Vagina (tissue), 2 donors: ENCODE measurements at regions of chr4 and their contacts with region 1.

Region 1: DNA sequence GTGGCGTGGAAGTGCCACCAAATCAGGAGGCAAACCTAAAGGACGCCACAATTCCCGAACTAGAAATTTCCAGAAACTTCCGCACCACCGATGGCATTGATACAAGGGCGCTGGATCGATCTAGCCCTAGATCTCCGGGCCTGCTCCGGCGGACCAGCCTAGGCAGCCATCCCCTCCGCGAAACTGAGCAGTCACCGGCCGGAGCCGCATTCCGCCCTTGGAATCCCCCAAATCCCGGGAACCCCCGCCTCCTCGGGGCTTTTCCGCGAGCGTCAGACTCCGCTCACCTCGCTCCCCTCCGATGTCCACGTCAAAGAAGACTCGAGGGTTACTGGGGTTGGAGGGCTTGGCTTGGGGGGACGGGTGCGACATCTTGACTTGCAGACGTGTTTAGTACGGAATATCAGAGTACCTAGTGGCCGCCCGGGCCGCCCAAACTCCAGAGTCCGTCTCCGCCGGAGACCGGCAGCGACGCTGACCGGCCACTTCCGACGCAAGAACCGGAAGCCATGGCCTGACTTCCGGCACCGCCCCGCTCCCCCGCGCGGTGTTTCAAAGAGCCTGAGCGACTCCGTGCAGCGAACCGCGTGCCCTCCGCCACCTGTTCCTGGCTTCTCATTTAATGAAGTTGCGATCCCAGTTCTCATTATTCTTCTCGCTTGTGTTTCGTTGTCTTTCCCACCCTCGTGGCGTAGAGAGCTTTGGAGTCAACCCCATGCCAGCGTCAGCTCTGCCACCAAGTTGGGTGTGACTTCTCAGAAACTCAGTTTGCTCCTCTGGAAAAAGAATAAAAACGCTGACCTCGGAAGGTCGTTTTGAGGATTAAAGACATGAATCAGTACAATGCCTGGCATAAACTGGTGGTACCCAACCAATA is at the start of gene PPID:
- DNase-seq: no peak
- H3K4me3 ChIP-seq: peak within 1 kb of the TSS; percentile 77 to 92
- H3K27ac ChIP-seq: peak within 1 kb of the TSS; percentile 96
- H3K4me1 ChIP-seq: peaks cover 12% of the 10 kb centered on the region
- H3K27me3 ChIP-seq: no peaks in the 10 kb centered on the region
- CTCF ChIP-seq: no peak
- POLR2A ChIP-seq: peak in 1 of 2 donors; percentile 68
- total RNA-seq, gene PPID: 15.0 TPM

Region 2: GRCh38 chr4:159175085-159175988 is 452.2 kb after region 1 on chr4:
- intact Hi-C with region 1: loop called (anchors 10 kb)
- DNase-seq: no peak
- H3K4me3 ChIP-seq: no peak overlapping the region
- H3K27ac ChIP-seq: peak overlapping the region; percentile 22
- H3K4me1 ChIP-seq: peaks cover 31% of the 10 kb centered on the region
- H3K27me3 ChIP-seq: no peaks in the 10 kb centered on the region
- CTCF ChIP-seq: peak; percentile 71 to 88 (median 80)
- POLR2A ChIP-seq: no peak

Region 3: GRCh38 chr4:160685729-160686128 is 1962.6 kb after region 1 on chr4:
- intact Hi-C with region 1: no loop called
- DNase-seq: no peak
- H3K4me3 ChIP-seq: no peak overlapping the region
- H3K27ac ChIP-seq: no peak overlapping the region
- H3K4me1 ChIP-seq: no peaks in the 10 kb centered on the region
- H3K27me3 ChIP-seq: no peaks in the 10 kb centered on the region
- CTCF ChIP-seq: no peak
- POLR2A ChIP-seq: no peak